Activated B cell treated with CpG ODN at 0.5 μM for 24 hours (primary cell): ENCODE measurements at regions of chr1 and their contacts with region 1.

Region 1: GRCh38 chr1:13699936-13700520 is at the start of gene PRDM2:
- DNase-seq: peak; percentile 77
- ATAC-seq: peak; percentile 30
- H3K4me3 Mint-ChIP-seq: peak within 1 kb of the TSS; percentile 91
- H3K27ac Mint-ChIP-seq: peak within 1 kb of the TSS; percentile 98
- H3K4me1 Mint-ChIP-seq: peaks cover 60% of the 10 kb centered on the region
- H3K27me3 Mint-ChIP-seq: no peaks in the 10 kb centered on the region
- CTCF ChIP-seq: no peak
- total RNA-seq, gene PRDM2: 183 and 194 TPM in 2 replicates

Region 2: GRCh38 chr1:13667691-13668090 is 32.3 kb before region 1 on chr1:
- CTCF ChIA-PET with region 1: interaction called, 11 read pairs
- POLR2A ChIA-PET with region 1: interaction called, 79 read pairs
- intact Hi-C with region 1: loop called (anchors 1 kb)
- DNase-seq: no peak
- ATAC-seq: peak; percentile 75
- H3K4me3 Mint-ChIP-seq: peak overlapping the region; percentile 78
- H3K27ac Mint-ChIP-seq: peak overlapping the region; percentile 95
- H3K4me1 Mint-ChIP-seq: peaks cover 48% of the 10 kb centered on the region
- H3K27me3 Mint-ChIP-seq: no peaks in the 10 kb centered on the region
- CTCF ChIP-seq: no peak

Region 3: DNA sequence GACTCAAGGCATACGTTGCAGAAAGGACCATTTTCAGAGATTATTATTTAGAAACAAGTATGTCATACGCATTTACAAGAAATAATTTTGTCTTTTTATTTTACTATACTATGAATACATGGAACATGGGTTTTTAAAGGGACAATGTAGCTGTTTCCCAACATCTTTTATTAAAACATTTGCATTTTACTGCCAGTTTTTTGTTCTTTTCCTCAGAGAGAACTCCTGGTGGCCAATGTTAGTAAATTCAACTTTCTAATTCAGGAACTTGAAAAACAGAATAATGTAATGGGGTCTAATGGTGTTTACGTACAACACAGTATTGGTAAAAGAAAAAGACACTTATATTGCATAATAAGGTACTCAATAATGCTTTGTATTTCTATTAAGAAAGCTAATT is 14.8 kb after region 1 on chr1:
- CTCF ChIA-PET with region 1: interaction called, 7 read pairs
- POLR2A ChIA-PET with region 1: interaction called, 440 read pairs
- intact Hi-C with region 1: loop called (anchors 1 kb)
- DNase-seq: no peak
- ATAC-seq: no peak
- H3K4me3 Mint-ChIP-seq: no peak overlapping the region
- H3K27ac Mint-ChIP-seq: peak overlapping the region; percentile 65
- H3K4me1 Mint-ChIP-seq: peaks cover 78% of the 10 kb centered on the region
- H3K27me3 Mint-ChIP-seq: no peaks in the 10 kb centered on the region
- CTCF ChIP-seq: no peak

Region 4: DNA sequence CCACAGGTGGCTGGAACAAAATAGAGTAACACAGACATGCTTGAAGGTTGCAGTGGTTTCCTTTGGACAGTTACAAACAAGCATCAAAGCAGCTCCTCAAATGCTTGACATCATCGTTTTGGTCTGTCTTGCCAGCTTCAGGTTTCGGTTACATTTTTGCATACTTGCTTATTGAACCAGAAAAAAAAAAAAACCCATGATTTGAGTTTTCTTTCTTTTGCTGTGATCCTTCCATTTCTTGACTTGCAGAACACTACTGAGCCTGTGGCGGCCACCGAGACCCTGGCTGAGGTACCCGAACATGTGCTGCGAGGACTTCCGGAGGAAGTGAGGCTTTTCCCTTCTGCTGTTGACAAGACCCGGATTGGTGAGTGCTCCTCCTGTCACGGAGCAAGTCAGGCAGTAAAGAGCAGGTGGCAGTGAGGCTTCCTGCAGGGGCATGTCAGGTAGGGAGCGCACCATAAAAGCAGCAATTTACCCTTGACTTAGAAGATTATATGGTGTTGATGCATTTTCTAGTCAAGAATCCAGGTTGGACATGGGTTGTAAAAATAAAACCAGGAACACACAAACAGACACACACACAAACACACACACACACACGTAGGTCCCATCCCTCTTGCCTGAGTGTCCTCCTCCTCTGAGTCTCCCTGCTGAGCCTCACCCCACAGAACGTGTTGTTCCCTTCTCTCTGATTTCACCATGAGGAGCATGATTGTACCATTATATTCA is 30.9 kb after region 1 on chr1:
- CTCF ChIA-PET with region 1: interaction called, 29 read pairs
- POLR2A ChIA-PET with region 1: interaction called, 440 read pairs
- intact Hi-C with region 1: loop called (anchors 1 kb)
- DNase-seq: peak; percentile 76
- ATAC-seq: peak; percentile 89
- H3K4me3 Mint-ChIP-seq: peak overlapping the region; percentile 82
- H3K27ac Mint-ChIP-seq: peak overlapping the region; percentile 97
- H3K4me1 Mint-ChIP-seq: peaks cover 99% of the 10 kb centered on the region
- H3K27me3 Mint-ChIP-seq: no peaks in the 10 kb centered on the region
- CTCF ChIP-seq: no peak